ENCODE measurements at regions of chr6 and their contacts with region 1.

Region 1: GRCh38 chr6:82257088-82257772 is 9.7 kb upstream of the IBTK start:
- DNase-seq: no peak
- ATAC-seq: no peak
- H3K4me3 ChIP-seq: no peak overlapping the region
- H3K27ac ChIP-seq: no peak overlapping the region
- H3K4me1 ChIP-seq: peaks cover 24 to 26% of the 10 kb centered on the region in 2 experiments
- H3K27me3 ChIP-seq: no peaks in the 10 kb centered on the region
- CTCF ChIP-seq: peak in 2 of 3 experiments; percentile 16 to 24; a peak in 1 of 6 replicates
- POLR2A ChIP-seq: no peak
- RAD21 ChIP-seq: peak; percentile 50

Region 2: DNA sequence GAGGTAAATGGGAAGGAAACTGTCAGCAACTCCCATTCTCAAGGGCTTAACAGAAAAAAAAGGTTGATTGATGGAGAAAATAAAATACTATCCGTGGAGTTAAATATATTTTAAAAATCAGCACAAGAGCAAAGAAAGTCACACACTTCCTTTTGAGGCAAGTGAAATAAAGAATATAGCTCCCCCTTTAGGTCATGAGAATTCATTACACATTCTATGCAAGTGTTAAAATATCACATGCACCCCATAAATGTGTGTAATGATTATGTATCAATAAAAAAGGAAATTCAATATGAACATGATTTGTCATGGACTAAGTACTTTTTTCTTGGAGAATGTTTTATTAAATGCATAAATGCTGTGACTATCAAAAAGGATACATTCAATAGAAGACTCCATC is 455.6 kb after region 1 on chr6:
- CTCF ChIA-PET with region 1: no interaction called
- POLR2A ChIA-PET with region 1: no interaction called
- RAD21 ChIA-PET with region 1: no interaction called
- intact Hi-C with region 1: loop called (anchors 5 kb)
- DNase-seq: no peak
- ATAC-seq: no peak
- H3K4me3 ChIP-seq: no peak overlapping the region
- H3K27ac ChIP-seq: no peak overlapping the region
- H3K4me1 ChIP-seq: no peaks in the 10 kb centered on the region
- H3K27me3 ChIP-seq: no peaks in the 10 kb centered on the region
- CTCF ChIP-seq: peak in 2 of 3 experiments; percentile 33 to 63; a peak in 3 of 6 replicates
- POLR2A ChIP-seq: no peak
- RAD21 ChIP-seq: peak; percentile 45; the same call in 1 of the 2 replicates